Mammary epithelial cell (primary cell): ENCODE measurements at regions of chr5 and their contacts with region 1.

Region 1: DNA sequence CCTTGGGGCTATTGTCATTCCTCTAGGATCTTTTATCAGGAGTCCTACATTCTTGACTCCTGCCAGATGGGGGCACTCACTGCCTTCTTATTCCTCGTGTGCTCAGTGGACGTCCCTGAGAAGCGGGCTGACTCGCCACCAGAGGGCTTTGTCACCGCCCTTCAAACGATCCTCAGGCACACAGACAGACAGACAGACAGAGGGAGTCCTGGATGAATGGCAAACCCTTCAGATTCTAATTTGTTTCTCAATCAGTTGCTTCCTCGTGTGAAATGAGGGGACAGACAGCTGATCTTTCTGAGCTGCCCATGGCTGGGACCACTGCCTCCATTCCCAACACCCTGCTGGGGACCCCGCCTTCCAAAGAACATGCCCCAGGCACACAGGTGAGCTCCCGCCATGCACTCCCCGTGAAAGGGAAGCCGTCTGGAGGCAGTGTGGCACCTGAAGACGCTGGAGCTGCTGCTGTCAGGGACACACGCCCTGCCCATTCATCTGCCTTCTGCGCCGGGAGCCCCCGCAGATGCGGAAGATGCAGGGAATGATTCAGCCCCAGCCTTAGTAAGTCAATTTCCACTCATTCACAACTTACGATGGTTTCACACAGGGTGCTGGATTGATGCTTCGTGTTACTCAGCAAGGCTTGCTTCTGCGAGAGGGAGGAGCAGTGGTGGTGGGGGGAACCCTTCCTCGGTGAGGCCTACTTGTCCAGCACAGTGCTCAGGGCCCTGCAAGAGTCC is 24.9 kb upstream of the SH3PXD2B start:
- DNase-seq: peak; percentile 79
- H3K4me3 ChIP-seq: no peak overlapping the region
- H3K27ac ChIP-seq: no peak overlapping the region
- H3K4me1 ChIP-seq: no peaks in the 10 kb centered on the region
- H3K27me3 ChIP-seq: no peaks in the 10 kb centered on the region
- CTCF ChIP-seq: peak; percentile 90 to 95

Region 2: GRCh38 chr5:172380987-172381643 is 98.1 kb before region 1 on chr5:
- CTCF ChIA-PET with region 1: no interaction called
- dilution Hi-C with region 1: loop called (anchors 5 kb)
- in situ Hi-C with region 1: no loop called
- intact Hi-C with region 1: no loop called
- DNase-seq: no peak
- H3K4me3 ChIP-seq: no peak overlapping the region
- H3K27ac ChIP-seq: no peak overlapping the region
- H3K4me1 ChIP-seq: peaks cover 14% of the 10 kb centered on the region
- H3K27me3 ChIP-seq: no peaks in the 10 kb centered on the region
- CTCF ChIP-seq: no peak

Region 3: DNA sequence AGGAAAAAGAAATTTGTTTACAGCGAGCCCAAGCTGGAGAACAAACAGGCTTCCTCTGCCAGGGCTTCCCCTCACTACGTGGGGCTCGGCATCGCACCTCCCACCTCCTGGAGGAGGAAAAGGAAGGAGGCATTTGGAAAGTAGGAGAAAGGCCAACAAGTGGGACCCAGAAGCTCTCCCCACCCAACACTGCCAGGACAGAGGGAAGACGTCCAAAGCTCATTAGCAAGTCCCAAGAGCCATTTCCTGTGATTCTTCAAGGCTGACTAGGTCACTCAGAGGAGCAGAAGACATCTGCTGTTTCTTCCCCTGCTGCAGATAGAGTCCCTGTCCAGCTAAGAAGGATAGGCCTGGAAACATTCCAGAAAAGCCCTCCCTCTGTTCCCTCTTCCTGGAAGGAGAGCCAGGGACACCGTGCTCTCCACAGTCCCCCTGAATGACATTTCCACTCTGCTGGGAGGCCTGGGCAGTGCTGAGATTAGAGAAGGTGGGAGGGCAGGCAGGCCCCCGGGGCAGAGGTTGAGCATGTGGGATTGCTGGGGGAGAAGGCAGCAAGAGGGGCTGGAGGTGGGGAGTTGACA is 104.8 kb after region 1 on chr5:
- CTCF ChIA-PET with region 1: no interaction called
- dilution Hi-C with region 1: no loop called
- in situ Hi-C with region 1: no loop called
- intact Hi-C with region 1: loop called (anchors 1 kb)
- DNase-seq: no peak
- H3K4me3 ChIP-seq: no peak overlapping the region
- H3K27ac ChIP-seq: no peak overlapping the region
- H3K4me1 ChIP-seq: no peaks in the 10 kb centered on the region
- H3K27me3 ChIP-seq: peaks cover 6% of the 10 kb centered on the region
- CTCF ChIP-seq: no peak

Region 4: GRCh38 chr5:172690258-172691075 is 211.3 kb after region 1 on chr5:
- CTCF ChIA-PET with region 1: no interaction called
- dilution Hi-C with region 1: loop called (anchors 5 kb)
- in situ Hi-C with region 1: loop called (anchors 5 kb)
- intact Hi-C with region 1: no loop called
- DNase-seq: no peak
- H3K4me3 ChIP-seq: no peak overlapping the region
- H3K27ac ChIP-seq: no peak overlapping the region
- H3K4me1 ChIP-seq: no peaks in the 10 kb centered on the region
- H3K27me3 ChIP-seq: no peaks in the 10 kb centered on the region
- CTCF ChIP-seq: no peak

Region 5: GRCh38 chr5:172920447-172920849 is 441.2 kb after region 1 on chr5:
- CTCF ChIA-PET with region 1: no interaction called
- dilution Hi-C with region 1: no loop called
- in situ Hi-C with region 1: loop called (anchors 10 kb)
- intact Hi-C with region 1: no loop called
- DNase-seq: peak; percentile 49
- H3K4me3 ChIP-seq: no peak overlapping the region
- H3K27ac ChIP-seq: no peak overlapping the region
- H3K4me1 ChIP-seq: peaks cover 8% of the 10 kb centered on the region
- H3K27me3 ChIP-seq: no peaks in the 10 kb centered on the region
- CTCF ChIP-seq: no peak

Region 6: DNA sequence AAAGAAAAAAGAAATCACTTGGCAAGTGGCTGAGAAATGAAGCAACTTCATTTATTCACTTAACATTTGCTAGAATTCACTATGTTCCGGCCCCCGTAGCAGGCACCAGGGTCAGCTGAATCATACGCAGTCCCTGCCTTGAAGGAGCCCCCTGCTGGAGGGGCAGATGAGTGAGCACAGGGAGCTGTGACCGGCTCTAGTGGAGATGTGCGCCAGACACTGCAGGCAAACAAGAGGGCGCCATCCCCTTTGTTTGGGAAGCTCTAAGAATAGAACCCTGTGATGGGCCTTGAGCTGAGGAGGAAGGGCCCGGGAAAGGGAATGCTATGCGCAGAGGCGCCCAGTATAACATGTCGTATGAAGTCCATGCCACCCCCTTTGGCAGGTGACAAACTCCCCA is 459.9 kb after region 1 on chr5:
- CTCF ChIA-PET with region 1: no interaction called
- dilution Hi-C with region 1: no loop called
- in situ Hi-C with region 1: no loop called
- intact Hi-C with region 1: no loop called
- DNase-seq: no peak
- H3K4me3 ChIP-seq: no peak overlapping the region
- H3K27ac ChIP-seq: no peak overlapping the region
- H3K4me1 ChIP-seq: no peaks in the 10 kb centered on the region
- H3K27me3 ChIP-seq: no peaks in the 10 kb centered on the region
- CTCF ChIP-seq: peak; percentile 7 to 44

Region 7: GRCh38 chr5:173016621-173017047 is 537.4 kb after region 1 on chr5:
- CTCF ChIA-PET with region 1: no interaction called
- dilution Hi-C with region 1: no loop called
- in situ Hi-C with region 1: no loop called
- intact Hi-C with region 1: no loop called
- DNase-seq: peak; percentile 89
- H3K4me3 ChIP-seq: no peak overlapping the region
- H3K27ac ChIP-seq: peak overlapping the region; percentile 62
- H3K4me1 ChIP-seq: peaks cover 26% of the 10 kb centered on the region
- H3K27me3 ChIP-seq: no peaks in the 10 kb centered on the region
- CTCF ChIP-seq: no peak

Region 8: GRCh38 chr5:173283318-173284288 is 804.4 kb after region 1 on chr5:
- CTCF ChIA-PET with region 1: no interaction called
- dilution Hi-C with region 1: no loop called
- in situ Hi-C with region 1: no loop called
- intact Hi-C with region 1: no loop called
- DNase-seq: peak; percentile 75
- H3K4me3 ChIP-seq: peak overlapping the region; percentile 24 to 33 (median 24)
- H3K27ac ChIP-seq: no peak overlapping the region
- H3K4me1 ChIP-seq: peaks cover 9% of the 10 kb centered on the region
- H3K27me3 ChIP-seq: no peaks in the 10 kb centered on the region
- CTCF ChIP-seq: peak; percentile 59 to 71